ENCODE measurements at regions of chr9 and their contacts with region 1.

Region 1: DNA sequence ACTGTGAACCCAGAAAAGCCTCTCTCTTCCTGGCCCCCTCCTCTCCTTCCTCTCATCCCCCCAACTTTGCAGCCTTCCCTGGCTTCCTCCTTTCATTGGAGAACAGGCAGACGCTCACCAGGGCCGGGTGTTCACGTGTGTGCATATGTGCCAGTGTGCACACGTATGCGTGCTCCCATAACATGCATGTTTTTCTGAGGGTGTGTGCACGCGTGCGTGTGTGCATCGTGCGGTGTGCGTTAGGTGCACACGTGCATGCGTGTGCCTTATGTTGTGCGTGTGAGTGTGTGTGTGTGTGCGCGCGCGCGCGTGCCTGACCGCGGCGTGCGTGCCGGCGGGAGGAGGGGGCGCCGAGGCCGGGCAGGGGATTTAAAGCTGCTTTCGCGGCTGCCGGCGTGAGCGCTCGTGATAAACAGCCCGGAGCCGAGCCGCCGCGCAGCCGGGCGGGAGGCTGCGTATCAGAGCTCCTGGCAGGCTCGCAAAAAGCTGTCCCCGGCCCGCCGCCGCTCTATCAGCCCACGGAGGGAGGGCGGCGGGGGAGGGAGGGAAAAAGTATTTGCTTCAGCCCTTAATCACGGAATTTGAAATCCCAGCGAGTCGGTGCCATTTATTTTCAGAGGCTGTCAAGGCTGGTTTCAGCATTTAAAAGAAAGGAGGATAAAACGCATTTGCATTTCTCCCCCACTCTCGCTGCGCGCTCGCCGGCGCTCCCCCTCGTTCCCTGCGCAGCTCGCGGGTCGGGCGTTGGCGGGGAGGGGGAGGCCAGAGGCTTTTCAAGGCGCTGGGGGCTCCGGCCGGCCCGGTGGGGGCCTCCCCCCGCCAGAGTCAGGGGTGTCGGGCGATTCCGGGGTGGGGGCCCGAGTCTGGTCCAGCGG is 183.9 kb downstream of the C9orf50 start:
- DNase-seq: peak in 8 of 9 donors; percentile 21 to 52 (median 45)
- ATAC-seq: peak; percentile 75
- H3K4me3 ChIP-seq: peak overlapping the region; percentile 62
- H3K4me3 Mint-ChIP-seq: peak overlapping the region; percentile 80 to 93 (median 85)
- H3K27ac ChIP-seq: peak overlapping the region; percentile 32
- H3K27ac Mint-ChIP-seq: peak overlapping the region in 7 of 9 donors; percentile 25 to 89 (median 70)
- H3K4me1 ChIP-seq: peaks cover 10 to 19% of the 10 kb centered on the region in 2 donors
- H3K4me1 Mint-ChIP-seq: peaks cover 21 to 37% (median 27%) of the 10 kb centered on the region in 7 donors
- H3K27me3 ChIP-seq: peaks cover 5 to 8% of the 10 kb centered on the region in 2 donors
- H3K27me3 Mint-ChIP-seq: peaks cover 27 to 73% (median 32%) of the 10 kb centered on the region in 5 donors

Region 2: DNA sequence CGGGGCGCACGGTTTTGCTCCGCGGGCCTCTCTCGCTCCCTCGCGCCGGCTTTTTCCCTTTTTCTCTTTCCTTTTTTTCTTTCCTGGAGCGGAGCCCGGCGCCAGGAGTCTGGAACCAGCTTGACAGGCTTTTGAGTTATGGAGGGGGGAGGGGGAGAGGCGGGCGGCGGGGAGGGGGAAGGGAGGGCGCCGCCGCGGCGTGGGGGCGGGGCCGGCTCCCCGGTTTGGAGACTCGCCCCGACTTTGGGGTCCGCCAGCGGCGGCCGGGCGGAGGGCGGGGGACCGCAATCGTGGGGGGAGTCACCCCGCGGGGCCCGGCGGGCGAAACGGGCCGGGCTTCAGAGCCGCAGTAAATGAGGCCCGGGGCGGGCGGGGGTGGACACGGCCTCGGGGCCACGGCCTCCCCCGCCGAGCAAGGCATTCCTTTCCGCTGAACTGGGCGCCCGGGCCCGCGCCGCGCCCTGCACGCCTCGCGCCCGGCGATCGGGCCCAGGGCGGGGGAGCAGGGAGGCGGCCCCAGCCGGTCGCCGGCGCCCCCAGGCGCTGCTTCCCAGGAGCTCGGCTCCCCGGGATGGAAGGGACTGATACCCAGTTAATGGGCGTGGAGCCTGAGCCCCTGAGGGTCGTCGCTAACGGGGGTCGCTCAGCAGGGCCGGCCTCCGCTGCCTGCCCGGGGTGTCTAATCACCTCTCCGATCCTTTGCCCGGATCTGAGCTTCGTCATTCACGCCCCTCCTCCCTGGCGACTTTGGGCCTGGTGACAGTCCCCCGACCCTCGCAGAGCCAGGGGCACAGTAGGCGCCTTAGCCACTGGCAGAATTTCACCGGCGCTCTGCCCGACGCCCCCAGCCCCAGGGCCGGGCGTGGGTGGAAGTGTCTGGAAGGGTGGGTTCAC is 45.8 kb after region 1 on chr9:
- CTCF ChIA-PET with region 1: no interaction called
- POLR2A ChIA-PET with region 1: interaction called, 3 read pairs
- intact Hi-C with region 1: loop called in 1 of 2 experiments (anchors 2 kb)
- DNase-seq: peak in 2 of 9 donors; percentile 41 to 61
- ATAC-seq: peak; percentile 57
- H3K4me3 ChIP-seq: peak overlapping the region; percentile 35
- H3K4me3 Mint-ChIP-seq: peak overlapping the region in 9 of 10 donors; percentile 58 to 82 (median 71)
- H3K27ac ChIP-seq: peak overlapping the region; percentile 20
- H3K27ac Mint-ChIP-seq: peak overlapping the region in 3 of 9 donors; percentile 32 to 97 (median 69)
- H3K4me1 ChIP-seq: peaks cover 17 to 20% of the 10 kb centered on the region in 2 donors
- H3K4me1 Mint-ChIP-seq: peaks cover 19 to 41% (median 34%) of the 10 kb centered on the region in 7 donors
- H3K27me3 ChIP-seq: no peaks in the 10 kb centered on the region
- H3K27me3 Mint-ChIP-seq: peaks cover 0 to 8% (median 0%) of the 10 kb centered on the region in 5 donors

Region 3: DNA sequence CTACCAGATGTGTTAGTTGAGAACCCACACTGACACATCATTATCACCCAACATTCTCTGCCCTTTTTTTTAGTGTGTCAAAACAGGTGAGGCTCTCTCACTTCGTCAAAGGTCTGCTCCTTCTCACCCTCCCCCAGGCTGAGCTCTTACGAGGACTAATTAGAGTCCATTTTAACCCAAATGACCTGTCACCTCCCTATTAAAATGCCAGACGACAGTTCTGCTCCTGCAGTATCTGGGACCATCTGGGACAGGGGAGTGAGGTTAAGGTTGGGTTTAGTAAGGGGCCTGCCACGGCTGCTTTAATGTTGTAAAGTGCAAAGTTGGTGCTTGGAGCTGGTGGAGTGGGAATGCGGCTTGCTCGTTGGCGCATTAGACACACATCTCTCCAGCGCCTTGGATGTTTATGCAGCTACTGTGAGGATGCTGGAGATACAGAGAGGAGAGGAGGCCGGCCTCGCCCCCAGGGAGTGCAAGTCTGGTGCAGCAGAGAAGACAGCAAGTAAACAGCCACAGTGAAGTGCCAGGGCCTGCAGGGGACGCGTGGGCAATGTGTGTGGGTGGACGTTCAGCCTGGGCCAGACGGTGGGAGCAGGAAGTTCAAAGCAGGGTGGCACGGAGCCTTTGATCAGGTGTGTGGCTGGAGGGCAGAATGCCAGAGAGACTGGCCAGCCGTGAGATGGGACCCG is 87.7 kb after region 1 on chr9:
- CTCF ChIA-PET with region 1: no interaction called
- POLR2A ChIA-PET with region 1: no interaction called
- intact Hi-C with region 1: no loop called
- DNase-seq: no peak
- ATAC-seq: no peak
- H3K4me3 ChIP-seq: no peak overlapping the region
- H3K4me3 Mint-ChIP-seq: peak overlapping the region in 1 of 10 donors; percentile 22
- H3K27ac ChIP-seq: no peak overlapping the region
- H3K27ac Mint-ChIP-seq: no peak overlapping the region
- H3K4me1 ChIP-seq: no peaks in the 10 kb centered on the region
- H3K4me1 Mint-ChIP-seq: peaks cover 0 to 4% (median 2%) of the 10 kb centered on the region in 7 donors
- H3K27me3 ChIP-seq: no peaks in the 10 kb centered on the region
- H3K27me3 Mint-ChIP-seq: peaks cover 4 to 18% (median 6%) of the 10 kb centered on the region in 5 donors

Measured in naive thymus-derived CD4-positive, alpha-beta T cell (primary cell).